ENCODE measurements at regions of chr5 and their contacts with region 1.

Region 1: DNA sequence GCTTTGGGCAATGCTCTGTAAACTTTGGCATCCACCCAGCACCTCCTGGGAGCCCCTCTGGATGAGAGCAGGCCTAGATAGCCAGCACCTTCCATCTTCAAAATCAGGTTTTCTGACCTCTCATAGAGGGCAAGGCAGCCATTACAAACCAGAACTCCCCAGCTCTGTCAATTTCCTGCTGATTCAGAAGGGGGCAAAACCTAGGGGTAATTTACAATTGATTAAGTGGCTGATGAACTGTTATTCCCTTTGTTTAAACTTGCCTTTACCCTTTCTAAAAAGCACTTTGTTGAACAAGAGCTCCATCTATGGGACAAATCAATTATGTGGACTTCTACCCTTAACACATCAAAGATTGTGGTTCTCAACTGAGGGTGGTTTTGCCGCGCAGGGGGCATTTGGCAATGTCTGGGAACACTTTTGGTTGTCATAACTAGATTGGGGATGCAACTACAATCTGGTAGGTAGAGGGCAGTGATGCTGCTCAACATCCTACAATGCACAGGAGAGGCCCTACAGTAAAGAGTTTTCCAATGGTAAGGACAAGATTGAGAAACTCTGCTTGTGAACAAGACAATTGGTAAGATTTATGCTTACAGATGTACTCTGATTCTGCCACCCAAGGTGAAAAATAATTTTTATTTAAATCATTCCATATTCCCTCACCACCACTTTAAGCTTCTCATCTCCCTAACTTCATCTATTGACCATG is 184.1 kb downstream of the MARCHF11 start:
- DNase-seq: peak in 1 of 2 experiments; percentile 16
- ATAC-seq: peak; percentile 64 to 79; a peak in 5 of 6 replicates
- H3K4me3 ChIP-seq: no peak overlapping the region
- H3K27ac ChIP-seq: no peak overlapping the region
- H3K4me1 ChIP-seq: peaks cover 4% of the 10 kb centered on the region; the same call in 1 of the 3 replicates
- CTCF ChIP-seq: peak; percentile 51
- EP300 ChIP-seq: no peak
- POLR2A ChIP-seq: no peak
- RAD21 ChIP-seq: peak; percentile 63 to 71

Region 2: GRCh38 chr5:15105796-15106393 is 889.6 kb before region 1 on chr5:
- CTCF ChIA-PET with region 1: interaction called, 19 read pairs
- POLR2A ChIA-PET with region 1: no interaction called
- DNase-seq: peak; percentile 46 to 64
- ATAC-seq: peak; percentile 80 to 92; a peak in 5 of 6 replicates
- H3K4me3 ChIP-seq: no peak overlapping the region
- H3K27ac ChIP-seq: no peak overlapping the region
- H3K4me1 ChIP-seq: no peaks in the 10 kb centered on the region
- CTCF ChIP-seq: peak; percentile 65
- EP300 ChIP-seq: no peak
- POLR2A ChIP-seq: no peak
- RAD21 ChIP-seq: peak; percentile 54 to 59; a peak in 4 of 5 replicates

Region 3: GRCh38 chr5:16009256-16009655 is 13.8 kb after region 1 on chr5:
- CTCF ChIA-PET with region 1: interaction called, 10 read pairs
- POLR2A ChIA-PET with region 1: no interaction called
- DNase-seq: no peak
- ATAC-seq: no peak
- H3K4me3 ChIP-seq: no peak overlapping the region
- H3K27ac ChIP-seq: no peak overlapping the region
- H3K4me1 ChIP-seq: no peaks in the 10 kb centered on the region
- CTCF ChIP-seq: no peak
- EP300 ChIP-seq: no peak
- POLR2A ChIP-seq: no peak
- RAD21 ChIP-seq: no peak